SK-N-SH (cell line): ENCODE measurements at regions of chr19 and their contacts with region 1.

Region 1: DNA sequence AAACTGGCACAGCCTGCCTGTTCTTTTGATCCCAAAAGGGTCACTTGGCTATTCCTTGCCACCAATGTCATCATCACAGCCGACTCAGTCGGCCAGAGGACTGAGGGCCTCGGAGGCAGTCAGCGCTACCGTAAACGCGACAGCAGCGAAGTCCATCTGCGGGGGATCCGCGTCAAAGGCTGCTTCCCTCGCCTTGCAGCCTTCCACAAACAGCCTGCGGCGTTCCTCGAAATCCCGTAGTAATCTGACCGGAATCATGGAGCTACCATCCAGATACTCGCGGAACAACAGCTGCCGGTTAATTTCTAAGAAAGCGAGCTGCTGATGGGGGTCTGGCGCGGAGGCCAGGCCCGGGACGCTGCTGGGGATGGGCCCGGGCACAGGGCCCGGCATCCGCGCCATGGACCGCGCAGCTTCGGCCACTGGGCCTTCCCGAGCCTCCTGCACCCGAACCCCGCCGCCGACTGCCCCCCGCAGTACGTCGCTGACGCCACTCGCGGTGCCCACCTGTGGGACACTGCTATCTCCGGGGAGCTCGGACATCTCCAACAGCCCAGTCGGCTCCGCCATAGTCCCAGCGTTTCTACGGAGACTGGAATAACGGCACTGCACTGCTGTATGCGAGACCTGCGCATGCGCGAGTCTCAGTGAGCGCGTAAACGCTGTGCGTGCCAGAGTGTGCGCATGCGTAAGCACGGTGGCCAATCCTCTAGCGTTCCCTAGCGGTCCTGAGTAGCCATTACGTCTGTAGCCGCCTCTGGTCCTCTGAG is at the start of gene EID2B:
- DNase-seq: peak; percentile 95
- H3K4me3 ChIP-seq: peak within 1 kb of the TSS; percentile 76 to 83
- H3K27ac ChIP-seq: peak within 1 kb of the TSS; percentile 54 to 77
- H3K4me1 ChIP-seq: no peaks in the 10 kb centered on the region; a peak in 2 of 4 replicates
- H3K27me3 ChIP-seq: no peaks in the 10 kb centered on the region
- CTCF ChIP-seq: peak; percentile 92
- EP300 ChIP-seq: no peak
- RAD21 ChIP-seq: peak; percentile 99
- polyA plus RNA-seq, gene EID2B: 5.4 and 6.5 TPM in 2 replicates

Region 2: DNA sequence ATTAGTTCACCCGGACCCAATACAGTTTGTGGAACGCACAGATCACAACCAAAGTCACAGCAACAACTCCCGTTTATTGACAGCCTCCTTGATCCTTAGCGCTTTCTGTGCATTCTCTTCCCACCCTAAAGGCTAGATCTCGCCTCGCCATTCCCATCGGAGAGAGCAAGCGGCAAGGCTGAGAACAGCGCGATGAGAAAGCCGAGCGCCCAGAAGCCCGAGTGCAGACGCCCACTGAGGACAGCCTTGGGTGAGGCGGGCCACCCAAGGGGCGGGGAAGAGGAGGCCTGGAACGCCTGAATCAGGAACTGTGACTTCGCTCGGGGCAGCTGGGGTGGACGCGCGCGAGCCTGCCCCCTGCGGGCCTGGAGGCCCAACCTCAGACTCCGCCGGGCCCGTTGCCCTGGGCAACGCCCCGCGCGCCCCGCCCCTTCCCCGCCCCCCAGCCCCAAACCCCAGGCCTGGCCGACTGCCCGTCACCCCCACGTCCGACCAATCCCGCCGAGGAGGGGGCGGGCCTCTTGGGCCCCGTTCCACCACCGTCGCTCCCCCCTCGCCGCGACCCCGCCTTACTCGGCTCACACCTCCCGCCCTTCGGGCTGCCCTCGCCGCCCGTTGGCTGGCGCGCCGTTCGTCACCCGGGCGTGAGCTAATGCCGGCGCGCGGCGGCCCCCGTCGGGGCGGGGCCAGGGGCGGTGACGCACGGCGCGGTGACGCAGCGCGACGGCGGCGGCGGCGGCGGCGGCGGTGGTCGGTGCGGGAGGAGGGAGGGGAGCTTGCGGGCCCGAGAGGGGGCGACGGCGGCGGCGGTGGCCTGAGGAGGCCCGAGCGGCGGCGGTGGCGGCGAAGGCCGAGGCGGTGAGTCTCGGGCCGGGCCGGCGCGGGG is 190.5 kb before region 1 on chr19 and contains the start of gene SAMD4B:
- CTCF ChIA-PET with region 1: no interaction called
- POLR2A ChIA-PET with region 1: no interaction called
- DNase-seq: peak; percentile 99
- H3K4me3 ChIP-seq: peak within 1 kb of the TSS; percentile 76 to 89
- H3K27ac ChIP-seq: peak within 1 kb of the TSS; percentile 77 to 83
- H3K4me1 ChIP-seq: peaks cover 0 to 15% of the 10 kb centered on the region in 2 experiments; a peak in 3 of 4 replicates
- H3K27me3 ChIP-seq: no peaks in the 10 kb centered on the region
- CTCF ChIP-seq: peak; percentile 60
- EP300 ChIP-seq: no peak; a peak in 1 of 4 replicates
- RAD21 ChIP-seq: 0 out of 2 replicates have a peak, but pooled peaks have one; percentile 7
- polyA plus RNA-seq, gene SAMD4B: 62.2 and 83.0 TPM in 2 replicates

Region 3: GRCh38 chr19:39381910-39382611 is 150.4 kb before region 1 on chr19:
- CTCF ChIA-PET with region 1: no interaction called
- POLR2A ChIA-PET with region 1: no interaction called
- DNase-seq: no peak
- H3K4me3 ChIP-seq: no peak overlapping the region
- H3K27ac ChIP-seq: no peak overlapping the region
- H3K4me1 ChIP-seq: no peaks in the 10 kb centered on the region
- H3K27me3 ChIP-seq: no peaks in the 10 kb centered on the region
- CTCF ChIP-seq: no peak
- EP300 ChIP-seq: no peak
- RAD21 ChIP-seq: no peak

Region 4: DNA sequence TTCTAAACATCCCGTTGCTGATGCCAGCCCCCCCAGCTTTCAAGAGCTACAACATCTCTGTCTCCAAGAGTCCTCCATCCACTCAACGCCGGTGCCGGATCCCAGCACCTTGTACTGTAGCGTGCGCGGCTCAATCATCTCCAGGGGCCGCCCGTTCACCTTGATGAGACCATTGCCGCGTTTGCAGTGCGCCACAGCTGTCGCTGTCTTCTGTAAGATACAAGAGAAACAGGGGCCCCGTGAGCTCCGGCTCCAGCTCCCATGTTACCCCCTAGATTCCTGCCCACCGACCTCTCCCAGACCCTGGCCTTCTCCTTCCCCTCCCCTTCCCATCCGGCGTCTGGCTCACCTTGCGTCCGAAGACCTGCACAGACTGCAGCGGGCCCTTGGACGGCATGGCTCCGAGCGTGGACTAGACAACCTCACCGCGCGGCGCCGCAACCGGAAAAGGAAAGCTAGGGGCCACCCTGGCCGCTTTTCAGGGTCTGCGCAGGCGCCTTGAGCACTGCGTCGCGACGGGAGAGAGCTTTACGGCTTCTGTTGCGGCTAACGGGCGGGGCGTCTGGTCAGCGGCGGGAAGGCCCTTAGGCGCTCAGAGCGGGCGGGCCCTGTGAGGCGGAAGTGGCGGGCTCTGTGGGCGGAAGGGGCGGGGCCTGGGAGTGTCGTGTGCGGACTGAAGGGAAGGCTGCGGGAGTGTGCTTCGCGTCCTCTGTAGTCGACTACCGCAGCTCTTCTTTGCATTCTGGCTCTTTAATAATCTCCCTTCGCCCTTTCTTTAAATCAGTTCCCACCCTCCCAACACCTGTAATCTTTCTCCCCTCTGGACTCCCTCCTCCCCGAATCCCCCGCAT is 96.7 kb before region 1 on chr19 and contains the start of gene RPS16:
- CTCF ChIA-PET with region 1: interaction called, 57 read pairs
- POLR2A ChIA-PET with region 1: interaction called, 12 read pairs
- DNase-seq: peak; percentile 95
- H3K4me3 ChIP-seq: peak within 1 kb of the TSS; percentile 68 to 100
- H3K27ac ChIP-seq: peak within 1 kb of the TSS; percentile 85 to 92
- H3K4me1 ChIP-seq: peaks cover 15 to 17% of the 10 kb centered on the region in 2 experiments; a peak in 2 of 4 replicates
- H3K27me3 ChIP-seq: no peaks in the 10 kb centered on the region
- CTCF ChIP-seq: no peak
- EP300 ChIP-seq: peak in 1 of 2 experiments; percentile 32; a peak in 2 of 4 replicates
- RAD21 ChIP-seq: no peak
- polyA plus RNA-seq, gene RPS16: 5,038 and 7,541 TPM in 2 replicates

Region 5: DNA sequence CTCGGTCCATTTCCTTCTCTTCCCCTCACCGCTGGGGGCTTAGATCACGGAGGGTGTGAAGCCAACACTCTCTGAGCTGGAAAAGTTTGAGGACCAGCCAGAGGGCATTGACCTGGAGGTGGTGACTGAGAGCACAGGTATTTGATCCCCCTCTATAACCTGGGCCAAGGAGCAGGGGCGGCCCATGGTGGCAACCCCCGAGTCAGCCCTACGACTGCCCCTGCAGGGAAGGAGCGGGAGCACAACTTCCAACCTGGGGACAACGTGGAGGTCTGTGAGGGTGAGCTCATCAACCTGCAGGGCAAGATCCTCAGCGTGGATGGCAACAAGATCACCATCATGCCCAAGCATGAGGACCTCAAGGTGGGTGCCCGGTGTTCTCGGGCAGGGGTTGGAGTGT is 63.4 kb before region 1 on chr19:
- CTCF ChIA-PET with region 1: interaction called, 96 read pairs
- POLR2A ChIA-PET with region 1: no interaction called
- DNase-seq: no peak
- H3K4me3 ChIP-seq: no peak overlapping the region
- H3K27ac ChIP-seq: no peak overlapping the region
- H3K4me1 ChIP-seq: no peaks in the 10 kb centered on the region
- H3K27me3 ChIP-seq: no peaks in the 10 kb centered on the region
- CTCF ChIP-seq: no peak
- EP300 ChIP-seq: no peak
- RAD21 ChIP-seq: no peak

Region 6: DNA sequence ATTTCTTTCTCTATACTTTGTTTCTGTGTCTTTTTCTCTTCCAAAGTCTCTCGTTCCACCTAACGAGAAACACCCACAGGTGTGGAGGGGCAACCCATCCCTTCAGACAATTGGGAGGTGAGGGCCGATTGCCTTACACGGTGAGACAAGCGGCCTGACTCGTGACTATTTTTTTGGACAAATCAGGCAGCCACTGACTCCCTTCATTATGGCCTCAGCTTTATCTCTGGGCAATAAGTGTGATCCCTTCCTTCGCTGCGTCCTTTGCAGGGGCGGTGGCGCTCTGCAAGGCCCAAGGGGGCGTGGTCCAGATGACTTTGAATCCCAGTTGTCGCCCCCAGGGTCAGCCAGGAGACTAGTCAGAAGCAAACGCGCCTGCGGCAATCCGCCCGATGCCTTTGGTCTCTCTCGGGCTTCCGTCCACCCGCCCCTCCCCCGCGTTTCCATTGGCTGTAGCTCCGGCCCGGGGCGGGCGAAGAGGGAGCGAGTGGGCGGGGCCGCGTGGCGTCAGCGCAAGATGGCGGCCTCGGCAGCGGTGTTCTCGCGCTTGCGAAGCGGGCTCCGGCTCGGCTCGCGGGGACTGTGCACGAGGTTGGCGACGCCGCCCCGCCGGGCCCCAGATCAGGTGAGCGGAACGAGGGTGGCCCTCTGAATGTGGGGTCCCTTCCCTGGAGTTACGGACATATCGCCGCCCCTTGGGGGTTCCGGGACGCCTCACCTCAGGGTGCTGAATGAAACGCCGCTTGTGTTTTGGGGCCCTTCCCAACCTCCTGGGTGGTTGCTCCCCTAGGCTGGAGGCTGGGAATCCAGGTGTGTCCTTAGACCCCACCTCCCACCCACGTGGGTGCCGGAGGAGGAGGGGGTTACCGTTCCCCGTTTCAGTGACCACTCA is 51.8 kb before region 1 on chr19 and contains the start of gene TIMM50:
- CTCF ChIA-PET with region 1: interaction called, 96 read pairs
- POLR2A ChIA-PET with region 1: no interaction called
- DNase-seq: peak; percentile 96
- H3K4me3 ChIP-seq: peak within 1 kb of the TSS; percentile 94 to 95
- H3K27ac ChIP-seq: peak within 1 kb of the TSS; percentile 65 to 71
- H3K4me1 ChIP-seq: peaks cover 0 to 14% of the 10 kb centered on the region in 2 experiments; a peak in 1 of 4 replicates
- H3K27me3 ChIP-seq: no peaks in the 10 kb centered on the region
- CTCF ChIP-seq: no peak
- EP300 ChIP-seq: no peak
- RAD21 ChIP-seq: no peak
- polyA plus RNA-seq, gene TIMM50: 83.8 and 98.1 TPM in 2 replicates

Region 7: GRCh38 chr19:39506944-39507714 is 25.3 kb before region 1 on chr19:
- CTCF ChIA-PET with region 1: interaction called, 19 read pairs
- POLR2A ChIA-PET with region 1: no interaction called
- DNase-seq: peak; percentile 96
- H3K4me3 ChIP-seq: peak overlapping the region; percentile 64 to 76
- H3K27ac ChIP-seq: peak overlapping the region in 1 of 2 experiments; percentile 5; a peak in 1 of 4 replicates
- H3K4me1 ChIP-seq: peaks cover 0 to 5% of the 10 kb centered on the region in 2 experiments; a peak in 1 of 4 replicates
- H3K27me3 ChIP-seq: no peaks in the 10 kb centered on the region
- CTCF ChIP-seq: no peak
- EP300 ChIP-seq: no peak
- RAD21 ChIP-seq: no peak

Region 8: GRCh38 chr19:39557441-39558151 is 25.2 kb after region 1 on chr19:
- CTCF ChIA-PET with region 1: interaction called, 15 read pairs
- POLR2A ChIA-PET with region 1: no interaction called
- DNase-seq: no peak
- H3K4me3 ChIP-seq: peak overlapping the region; percentile 2 to 31; a peak in 2 of 4 replicates
- H3K27ac ChIP-seq: no peak overlapping the region
- H3K4me1 ChIP-seq: peaks cover 0 to 3% of the 10 kb centered on the region in 2 experiments; a peak in 1 of 4 replicates
- H3K27me3 ChIP-seq: peaks cover 5% of the 10 kb centered on the region; the same call in 1 of the 2 replicates
- CTCF ChIP-seq: no peak
- EP300 ChIP-seq: no peak
- RAD21 ChIP-seq: no peak

Region 9: DNA sequence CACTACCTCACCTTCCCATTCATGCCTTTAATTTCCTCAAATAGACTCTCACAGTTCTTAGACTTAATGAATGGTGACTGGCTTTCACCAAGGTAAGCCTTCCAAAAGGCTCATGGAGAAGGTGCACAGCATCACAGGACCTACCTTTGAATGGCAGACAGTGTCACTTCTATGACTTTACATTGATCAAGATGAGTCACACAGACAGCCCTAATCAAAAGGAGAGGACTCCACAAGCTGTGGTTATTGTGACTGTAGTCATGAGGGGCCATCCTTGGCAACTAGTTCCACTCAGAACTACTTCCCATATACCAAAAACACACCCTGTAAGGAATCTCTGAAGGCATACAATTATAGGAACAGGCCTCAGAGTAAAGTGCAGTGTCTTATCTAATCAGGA is 129.1 kb after region 1 on chr19:
- CTCF ChIA-PET with region 1: no interaction called
- POLR2A ChIA-PET with region 1: no interaction called
- DNase-seq: no peak
- H3K4me3 ChIP-seq: no peak overlapping the region
- H3K27ac ChIP-seq: no peak overlapping the region
- H3K4me1 ChIP-seq: no peaks in the 10 kb centered on the region
- H3K27me3 ChIP-seq: no peaks in the 10 kb centered on the region; the same call in 1 of the 2 replicates
- CTCF ChIP-seq: no peak
- EP300 ChIP-seq: no peak
- RAD21 ChIP-seq: no peak